ENCODE measurements at regions of chr9 and their contacts with region 1.

Region 1: DNA sequence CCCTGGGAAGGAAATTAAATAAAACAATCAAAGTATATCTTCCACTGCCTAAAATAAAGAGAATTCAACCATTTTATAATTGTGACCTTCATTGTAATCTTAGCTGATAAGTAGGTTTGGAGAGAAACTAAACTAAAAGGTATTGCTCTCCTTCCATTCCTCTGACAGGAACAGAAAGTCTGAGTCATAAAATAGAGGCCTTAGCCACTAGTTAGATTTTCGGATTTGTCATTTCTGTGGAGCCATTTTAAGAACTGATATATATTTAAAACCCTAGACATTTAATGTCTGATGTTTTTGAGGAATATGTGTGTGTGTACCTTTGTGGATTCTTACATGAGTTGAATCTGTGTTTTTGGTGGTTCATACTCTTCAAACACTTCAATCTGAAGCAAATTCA is 11.8 kb upstream of the TMC1 start:
- DNase-seq: no peak
- ATAC-seq: no peak
- H3K4me3 ChIP-seq: no peak overlapping the region
- H3K27ac ChIP-seq: no peak overlapping the region
- H3K4me1 ChIP-seq: peaks cover 0 to 8% (median 0%) of the 10 kb centered on the region in 12 donors
- H3K27me3 ChIP-seq: no peaks in the 10 kb centered on the region
- CTCF ChIP-seq: no peak
- POLR2A ChIP-seq: no peak

Region 2: DNA sequence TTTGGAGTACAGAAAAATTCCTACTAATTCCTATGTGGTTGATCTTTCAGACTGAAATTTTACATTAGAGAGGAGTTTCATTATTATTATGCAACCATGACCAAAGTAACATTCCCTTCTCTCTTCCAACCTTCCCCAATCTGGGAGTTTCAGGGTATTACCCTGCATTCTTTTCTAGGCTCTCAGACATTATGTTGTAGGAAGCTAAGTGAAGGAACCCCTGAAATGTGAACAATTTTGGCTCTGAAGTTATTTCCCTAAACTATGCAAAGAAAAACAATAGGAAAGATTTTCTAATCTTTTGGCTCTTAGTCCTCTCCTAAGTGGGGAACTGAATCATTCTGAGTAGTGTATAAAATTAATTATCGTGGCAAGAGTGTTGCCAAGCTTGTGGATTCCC is 81.3 kb before region 1 on chr9:
- intact Hi-C with region 1: loop called in 1 of 10 experiments (anchors 10 kb)
- DNase-seq: no peak
- ATAC-seq: no peak
- H3K4me3 ChIP-seq: no peak overlapping the region
- H3K27ac ChIP-seq: no peak overlapping the region
- H3K4me1 ChIP-seq: peaks cover 0 to 23% (median 0%) of the 10 kb centered on the region in 12 donors
- H3K27me3 ChIP-seq: no peaks in the 10 kb centered on the region
- CTCF ChIP-seq: no peak
- POLR2A ChIP-seq: no peak